Activated naive CD4-positive, alpha-beta T cell treated with anti-CD3 and anti-CD28 coated beads for 36 hours (primary cell): ENCODE measurements at regions of chr12 and their contacts with region 1.

Region 1: DNA sequence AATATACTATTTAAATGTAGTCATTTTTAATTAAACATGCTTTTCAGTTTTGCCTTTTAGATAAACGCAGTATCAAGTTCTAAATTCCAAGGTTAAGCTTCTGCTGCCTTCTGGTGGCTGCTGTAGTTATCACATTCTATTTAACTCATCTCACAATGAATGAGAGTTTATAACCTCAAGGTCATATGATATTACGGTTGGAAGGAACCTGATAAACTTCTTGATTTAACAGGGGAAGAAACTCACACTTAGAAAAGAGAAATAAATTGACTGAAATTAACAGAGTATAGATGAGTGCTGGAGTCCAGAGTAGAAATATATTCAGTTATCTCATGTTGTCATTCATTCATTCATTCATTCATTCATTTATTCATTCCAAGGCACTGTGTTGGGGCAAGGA is 31.9 kb downstream of the GUCY2C start:
- DNase-seq: peak; percentile 61
- H3K4me3 Mint-ChIP-seq: no peak overlapping the region
- H3K27ac Mint-ChIP-seq: no peak overlapping the region
- H3K4me1 Mint-ChIP-seq: peaks cover 2% of the 10 kb centered on the region
- H3K27me3 Mint-ChIP-seq: peaks cover 2% of the 10 kb centered on the region

Region 2: GRCh38 chr12:13864081-13864673 is 800.3 kb before region 1 on chr12:
- CTCF ChIA-PET with region 1: no interaction called
- intact Hi-C with region 1: loop called (anchors 10 kb)
- DNase-seq: peak; percentile 75
- H3K4me3 Mint-ChIP-seq: no peak overlapping the region
- H3K27ac Mint-ChIP-seq: no peak overlapping the region
- H3K4me1 Mint-ChIP-seq: no peaks in the 10 kb centered on the region
- H3K27me3 Mint-ChIP-seq: peaks cover 20% of the 10 kb centered on the region

Region 3: GRCh38 chr12:14185427-14186192 is 478.9 kb before region 1 on chr12:
- CTCF ChIA-PET with region 1: interaction called, 5 read pairs
- intact Hi-C with region 1: loop called (anchors 1 kb)
- DNase-seq: peak; percentile 47
- H3K4me3 Mint-ChIP-seq: no peak overlapping the region
- H3K27ac Mint-ChIP-seq: no peak overlapping the region
- H3K4me1 Mint-ChIP-seq: peaks cover 2% of the 10 kb centered on the region
- H3K27me3 Mint-ChIP-seq: peaks cover 5% of the 10 kb centered on the region

Region 4: DNA sequence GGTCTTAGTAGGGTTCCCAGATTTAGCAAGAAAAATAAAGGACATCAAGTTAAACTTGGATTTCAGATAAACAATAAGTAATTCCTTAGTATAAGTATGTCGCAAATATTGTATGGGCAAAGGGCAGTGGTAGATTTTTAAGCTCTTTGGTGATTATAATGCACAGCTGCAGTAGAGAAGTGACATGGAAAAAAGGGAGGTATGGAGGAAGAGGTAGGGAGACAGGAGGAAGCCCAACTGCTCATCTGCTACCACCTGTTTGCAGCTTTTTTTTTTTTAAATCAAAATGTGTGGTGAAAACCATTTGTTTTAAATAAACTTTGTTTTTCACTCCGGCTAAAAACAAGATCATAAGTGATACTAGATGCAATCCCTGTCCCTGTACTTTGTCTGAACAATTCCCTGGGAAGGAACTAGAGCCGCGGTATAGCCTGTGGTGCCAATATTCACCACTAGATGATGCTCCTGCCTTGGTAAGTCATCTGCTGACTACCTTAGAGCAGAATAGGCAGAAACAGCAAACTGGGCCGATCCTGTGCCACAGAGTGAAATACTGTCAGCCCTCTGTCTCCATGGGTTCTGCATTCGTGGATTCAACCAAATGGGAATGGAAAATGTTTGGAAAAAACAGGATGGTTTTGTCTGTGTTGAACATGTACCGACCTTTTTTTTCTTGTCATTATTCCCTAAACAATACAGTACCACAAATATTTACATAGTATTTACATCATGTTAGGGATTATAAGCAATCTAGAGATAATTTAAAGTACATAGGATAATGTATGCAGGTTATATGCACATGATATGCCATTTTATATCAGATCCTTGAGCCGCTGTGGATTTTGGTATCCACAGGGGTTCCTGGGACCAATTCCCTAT is 34.4 kb before region 1 on chr12:
- CTCF ChIA-PET with region 1: interaction called, 13 read pairs
- intact Hi-C with region 1: loop called (anchors 1 kb)
- DNase-seq: peak; percentile 79
- H3K4me3 Mint-ChIP-seq: no peak overlapping the region
- H3K27ac Mint-ChIP-seq: no peak overlapping the region
- H3K4me1 Mint-ChIP-seq: no peaks in the 10 kb centered on the region
- H3K27me3 Mint-ChIP-seq: no peaks in the 10 kb centered on the region

Region 5: GRCh38 chr12:14650789-14651188 is 13.7 kb before region 1 on chr12:
- CTCF ChIA-PET with region 1: no interaction called
- intact Hi-C with region 1: no loop called
- DNase-seq: no peak
- H3K4me3 Mint-ChIP-seq: no peak overlapping the region
- H3K27ac Mint-ChIP-seq: no peak overlapping the region
- H3K4me1 Mint-ChIP-seq: peaks cover 5% of the 10 kb centered on the region
- H3K27me3 Mint-ChIP-seq: no peaks in the 10 kb centered on the region

Region 6: DNA sequence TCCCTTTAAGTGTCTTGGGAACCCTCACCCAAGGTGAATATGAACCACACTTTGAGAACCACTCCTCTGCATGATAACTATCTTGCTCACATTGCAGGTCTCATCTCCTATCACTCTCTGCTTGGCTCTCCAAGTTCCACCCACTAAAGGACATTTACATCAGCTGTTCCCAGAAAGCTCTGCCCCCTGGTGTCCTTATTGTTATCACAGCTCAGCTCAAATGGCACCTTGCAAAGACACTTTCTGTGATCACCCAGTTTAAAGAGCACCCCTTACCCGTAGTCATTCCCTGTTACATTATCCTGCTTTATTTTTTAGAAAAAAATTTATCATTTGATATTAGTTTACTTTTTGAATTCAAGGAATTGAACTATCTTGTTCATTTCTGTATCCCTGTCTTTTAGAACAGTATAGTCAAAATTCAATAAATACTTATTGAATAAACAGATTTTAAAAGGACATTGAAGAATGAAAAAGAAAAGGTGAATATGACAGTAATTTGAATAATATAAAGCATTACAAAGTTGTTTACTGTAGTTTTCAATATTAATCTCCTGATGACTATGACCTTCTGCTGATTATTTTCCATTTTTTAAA is 52.4 kb after region 1 on chr12:
- CTCF ChIA-PET with region 1: interaction called, 4 read pairs
- intact Hi-C with region 1: loop called (anchors 1 kb)
- DNase-seq: peak; percentile 68
- H3K4me3 Mint-ChIP-seq: no peak overlapping the region
- H3K27ac Mint-ChIP-seq: no peak overlapping the region
- H3K4me1 Mint-ChIP-seq: no peaks in the 10 kb centered on the region
- H3K27me3 Mint-ChIP-seq: no peaks in the 10 kb centered on the region